CD14-positive monocyte (primary cell): ENCODE measurements at regions of chr12 and their contacts with region 1.

Region 1: GRCh38 chr12:124680863-124681778 is 113.7 kb upstream of the NCOR2 start:
- DNase-seq: peak; percentile 97 to 99 (median 99)
- H3K4me3 ChIP-seq: no peak overlapping the region
- H3K4me3 Mint-ChIP-seq: peak overlapping the region; percentile 60 to 68
- H3K27ac ChIP-seq: peak overlapping the region; percentile 60 to 91
- H3K27ac Mint-ChIP-seq: peak overlapping the region; percentile 91 to 98 (median 96)
- H3K4me1 ChIP-seq: peaks cover 73 to 80% of the 10 kb centered on the region in 2 donors
- H3K4me1 Mint-ChIP-seq: peaks cover 77% of the 10 kb centered on the region
- H3K27me3 ChIP-seq: no peaks in the 10 kb centered on the region
- H3K27me3 Mint-ChIP-seq: peaks cover 0 to 9% (median 3%) of the 10 kb centered on the region in 3 donors
- CTCF ChIP-seq: peak; percentile 40

Region 2: GRCh38 chr12:124391340-124392261 is 289.5 kb before region 1 on chr12:
- intact Hi-C with region 1: loop called in 1 of 2 experiments (anchors 10 kb)
- DNase-seq: peak; percentile 93 to 96 (median 94)
- H3K4me3 ChIP-seq: peak overlapping the region; percentile 32 to 85 (median 43)
- H3K4me3 Mint-ChIP-seq: peak overlapping the region; percentile 96 to 98
- H3K27ac ChIP-seq: peak overlapping the region; percentile 99 to 100
- H3K27ac Mint-ChIP-seq: peak overlapping the region; percentile 99 to 100 (median 100)
- H3K4me1 ChIP-seq: peaks cover 72 to 77% of the 10 kb centered on the region in 2 donors
- H3K4me1 Mint-ChIP-seq: peaks cover 63% of the 10 kb centered on the region
- H3K27me3 ChIP-seq: no peaks in the 10 kb centered on the region
- H3K27me3 Mint-ChIP-seq: peaks cover 0 to 2% (median 2%) of the 10 kb centered on the region in 3 donors
- CTCF ChIP-seq: no peak

Region 3: DNA sequence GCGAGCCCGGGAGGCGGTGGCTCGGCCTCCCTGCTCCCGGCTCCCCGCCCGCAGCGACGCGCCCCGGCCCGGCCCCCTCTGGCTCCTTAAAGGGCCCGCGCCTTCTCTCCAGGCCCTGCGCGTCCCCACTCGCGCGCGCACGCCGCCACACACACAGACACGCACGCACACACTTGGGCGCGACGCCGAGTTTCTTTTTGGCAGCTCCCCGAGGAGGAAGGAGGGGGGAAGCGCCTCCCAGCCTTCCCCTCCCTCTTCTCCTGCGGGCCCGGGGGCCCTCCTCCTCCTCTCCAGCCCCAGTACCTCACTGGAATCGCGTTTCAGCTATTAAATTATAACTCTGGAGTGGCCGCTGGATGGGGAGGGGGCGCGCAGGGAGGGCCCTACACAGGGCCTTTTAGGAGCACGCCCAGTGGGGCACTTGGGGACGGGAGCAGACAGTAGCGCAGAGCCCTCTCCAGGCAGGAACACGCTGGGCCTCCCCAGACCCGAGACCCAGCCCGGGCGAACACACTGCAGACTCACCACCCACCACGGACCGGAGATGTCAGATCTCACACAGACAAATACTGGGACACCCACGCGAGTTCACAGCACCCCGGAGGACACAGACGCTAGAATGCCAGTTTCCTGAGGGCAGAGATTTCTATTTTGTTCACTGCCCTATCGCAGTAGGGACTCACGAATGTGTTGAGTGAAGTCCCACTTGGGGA is 113.3 kb before region 1 on chr12:
- intact Hi-C with region 1: loop called in 1 of 2 experiments (anchors 5 kb)
- DNase-seq: peak; percentile 91 to 95 (median 95)
- H3K4me3 ChIP-seq: peak overlapping the region; percentile 14 to 74 (median 24)
- H3K4me3 Mint-ChIP-seq: peak overlapping the region; percentile 77 to 78
- H3K27ac ChIP-seq: peak overlapping the region; percentile 86 to 96
- H3K27ac Mint-ChIP-seq: peak overlapping the region; percentile 94 to 98 (median 96)
- H3K4me1 ChIP-seq: peaks cover 44 to 50% of the 10 kb centered on the region in 2 donors
- H3K4me1 Mint-ChIP-seq: peaks cover 47% of the 10 kb centered on the region
- H3K27me3 ChIP-seq: no peaks in the 10 kb centered on the region
- H3K27me3 Mint-ChIP-seq: no peaks in the 10 kb centered on the region
- CTCF ChIP-seq: no peak

Region 4: GRCh38 chr12:124636138-124636978 is 44.8 kb before region 1 on chr12:
- intact Hi-C with region 1: loop called in 1 of 2 experiments (anchors 5 kb)
- DNase-seq: peak; percentile 85 to 93 (median 93)
- H3K4me3 ChIP-seq: peak overlapping the region in 1 of 3 experiments; percentile 2
- H3K4me3 Mint-ChIP-seq: no peak overlapping the region
- H3K27ac ChIP-seq: peak overlapping the region; percentile 14 to 80
- H3K27ac Mint-ChIP-seq: peak overlapping the region; percentile 85 to 96 (median 90)
- H3K4me1 ChIP-seq: peaks cover 77 to 90% of the 10 kb centered on the region in 2 donors
- H3K4me1 Mint-ChIP-seq: peaks cover 70% of the 10 kb centered on the region
- H3K27me3 ChIP-seq: no peaks in the 10 kb centered on the region
- H3K27me3 Mint-ChIP-seq: peaks cover 0 to 5% (median 4%) of the 10 kb centered on the region in 3 donors
- CTCF ChIP-seq: no peak

Region 5: GRCh38 chr12:124713436-124714082 is 32.4 kb after region 1 on chr12:
- intact Hi-C with region 1: loop called in 1 of 2 experiments (anchors 2 kb)
- DNase-seq: peak; percentile 92 to 97 (median 95)
- H3K4me3 ChIP-seq: peak overlapping the region in 1 of 3 experiments; percentile 41
- H3K4me3 Mint-ChIP-seq: peak overlapping the region; percentile 71 to 89
- H3K27ac ChIP-seq: peak overlapping the region; percentile 95 to 100
- H3K27ac Mint-ChIP-seq: peak overlapping the region; percentile 99 to 100 (median 100)
- H3K4me1 ChIP-seq: peaks cover 57 to 69% of the 10 kb centered on the region in 2 donors
- H3K4me1 Mint-ChIP-seq: peaks cover 58% of the 10 kb centered on the region
- H3K27me3 ChIP-seq: no peaks in the 10 kb centered on the region
- H3K27me3 Mint-ChIP-seq: peaks cover 0 to 2% (median 0%) of the 10 kb centered on the region in 3 donors
- CTCF ChIP-seq: no peak

Region 6: GRCh38 chr12:124720004-124720680 is 39.0 kb after region 1 on chr12:
- intact Hi-C with region 1: loop called in 1 of 2 experiments (anchors 5 kb)
- DNase-seq: peak; percentile 64 to 67 (median 66)
- H3K4me3 ChIP-seq: no peak overlapping the region
- H3K4me3 Mint-ChIP-seq: peak overlapping the region; percentile 24 to 57
- H3K27ac ChIP-seq: peak overlapping the region; percentile 82 to 91
- H3K27ac Mint-ChIP-seq: peak overlapping the region; percentile 92 to 95 (median 93)
- H3K4me1 ChIP-seq: peaks cover 60 to 63% of the 10 kb centered on the region in 2 donors
- H3K4me1 Mint-ChIP-seq: peaks cover 61% of the 10 kb centered on the region
- H3K27me3 ChIP-seq: no peaks in the 10 kb centered on the region
- H3K27me3 Mint-ChIP-seq: peaks cover 0 to under 1% (median 0%) of the 10 kb centered on the region in 3 donors
- CTCF ChIP-seq: peak; percentile 31

Region 7: DNA sequence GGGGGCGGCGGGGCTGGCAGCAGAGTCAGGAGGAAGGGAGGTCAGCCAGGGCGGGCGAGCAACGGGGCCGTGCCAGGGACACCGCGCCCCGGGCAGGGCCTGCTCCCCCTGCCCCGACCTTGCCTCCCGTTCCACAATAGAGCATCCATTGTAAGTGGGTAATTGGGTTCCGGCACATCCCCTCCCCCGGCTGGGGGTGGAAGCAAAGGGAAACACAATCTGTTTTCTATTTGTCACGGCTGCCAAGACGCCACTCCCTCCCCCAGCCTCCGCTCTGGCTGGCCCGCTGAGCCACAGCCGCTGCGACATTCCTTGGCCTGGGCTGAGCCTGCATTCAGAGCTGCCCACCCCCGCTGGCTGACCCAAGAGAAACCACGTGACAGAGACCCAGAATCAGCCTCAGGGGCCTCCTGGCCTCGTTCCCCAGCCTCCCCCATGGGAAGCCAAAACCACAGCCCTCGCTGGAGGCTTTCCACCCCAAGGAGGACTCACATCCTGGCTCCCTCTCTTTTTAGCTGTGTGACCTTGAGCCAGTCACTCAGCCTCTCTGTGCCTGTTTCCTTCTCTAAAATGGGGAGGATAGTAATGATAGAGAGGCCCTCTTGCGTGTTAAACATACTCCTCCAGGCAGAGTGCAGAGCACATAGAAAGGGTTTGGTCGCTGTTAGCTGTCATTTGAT is 64.9 kb after region 1 on chr12:
- intact Hi-C with region 1: loop called (anchors 5 kb)
- DNase-seq: peak; percentile 70 to 78 (median 75)
- H3K4me3 ChIP-seq: peak overlapping the region in 1 of 3 experiments; percentile 49
- H3K4me3 Mint-ChIP-seq: peak overlapping the region; percentile 67 to 80
- H3K27ac ChIP-seq: peak overlapping the region; percentile 78 to 90
- H3K27ac Mint-ChIP-seq: peak overlapping the region; percentile 91 to 97 (median 95)
- H3K4me1 ChIP-seq: peaks cover 42 to 60% of the 10 kb centered on the region in 2 donors
- H3K4me1 Mint-ChIP-seq: peaks cover 61% of the 10 kb centered on the region
- H3K27me3 ChIP-seq: no peaks in the 10 kb centered on the region
- H3K27me3 Mint-ChIP-seq: peaks cover 2% of the 10 kb centered on the region in 3 donors
- CTCF ChIP-seq: no peak